ENCODE measurements at regions of chr3 and their contacts with region 1.

Region 1: GRCh38 chr3:146498002-146498736 is 28.8 kb upstream of the PLSCR2 start:
- DNase-seq: peak; percentile 85
- ATAC-seq: peak; percentile 86
- H3K4me3 Mint-ChIP-seq: peak overlapping the region; percentile 70
- H3K27ac Mint-ChIP-seq: peak overlapping the region; percentile 97
- H3K4me1 Mint-ChIP-seq: peaks cover 30% of the 10 kb centered on the region
- H3K27me3 Mint-ChIP-seq: peaks cover 2% of the 10 kb centered on the region

Region 2: GRCh38 chr3:146544002-146544928 is 46.1 kb after region 1 on chr3 and contains the start of gene PLSCR1:
- CTCF ChIA-PET with region 1: no interaction called
- POLR2A ChIA-PET with region 1: interaction called, 38 read pairs
- DNase-seq: peak; percentile 95
- ATAC-seq: peak; percentile 87
- H3K4me3 Mint-ChIP-seq: peak within 1 kb of the TSS; percentile 85
- H3K27ac Mint-ChIP-seq: peak within 1 kb of the TSS; percentile 97
- H3K4me1 Mint-ChIP-seq: peaks cover 74% of the 10 kb centered on the region
- H3K27me3 Mint-ChIP-seq: no peaks in the 10 kb centered on the region
- total RNA-seq, gene PLSCR1: 164 to 177 TPM